IMR-90 (cell line): ENCODE measurements at regions of chr6 and their contacts with region 1.

Region 1: DNA sequence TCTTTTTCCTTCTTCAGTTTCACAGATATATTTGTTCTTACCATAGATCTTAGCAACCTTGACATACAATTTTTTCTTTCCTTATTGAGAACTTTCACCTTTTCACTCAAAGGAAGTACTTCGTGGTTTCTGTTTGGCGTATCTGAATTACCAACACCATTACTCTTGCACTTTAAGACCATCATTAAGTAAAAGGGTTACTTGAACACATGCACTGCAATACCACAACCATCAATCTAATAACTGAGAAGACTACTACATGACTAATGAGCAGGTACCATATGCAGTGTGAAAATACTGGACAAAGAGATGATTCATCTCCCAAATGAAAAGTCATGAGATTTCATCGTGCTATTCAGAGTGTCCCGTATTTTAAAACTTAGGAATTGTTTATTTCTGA is 21.7 kb upstream of the SENP6 start:
- DNase-seq: no peak
- ATAC-seq: no peak
- H3K4me3 ChIP-seq: no peak overlapping the region
- H3K27ac ChIP-seq: no peak overlapping the region
- H3K4me1 ChIP-seq: no peaks in the 10 kb centered on the region
- H3K27me3 ChIP-seq: no peaks in the 10 kb centered on the region
- CTCF ChIP-seq: no peak
- POLR2A ChIP-seq: no peak
- RAD21 ChIP-seq: no peak

Region 2: DNA sequence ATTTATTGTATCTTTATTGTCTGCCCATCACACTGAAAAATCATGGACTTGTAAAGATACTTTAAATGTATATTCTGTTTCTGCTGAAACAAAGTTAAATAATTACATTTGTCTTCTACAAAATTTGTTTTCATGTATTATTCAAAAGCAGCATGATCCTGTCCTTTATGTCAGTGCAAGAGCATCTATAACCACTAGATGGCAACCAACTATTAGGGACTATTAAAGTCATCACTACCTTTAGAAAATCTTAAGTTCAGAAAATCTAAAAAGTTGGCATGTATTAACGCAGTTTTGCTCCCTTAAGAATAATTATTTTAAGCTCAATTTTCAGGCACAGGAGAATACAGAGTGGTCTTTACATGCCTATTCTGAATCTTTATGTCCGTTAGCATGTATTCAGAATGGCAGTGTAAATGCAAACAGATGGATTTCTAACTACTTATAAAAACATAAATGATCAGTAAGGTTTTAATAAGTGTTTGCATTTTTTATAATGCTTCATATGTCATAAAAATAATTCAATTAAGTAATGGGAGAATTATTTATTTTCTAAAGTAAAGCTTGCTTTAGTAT is 313.1 kb before region 1 on chr6:
- CTCF ChIA-PET with region 1: no interaction called
- POLR2A ChIA-PET with region 1: interaction called, 17 read pairs
- dilution Hi-C with region 1: no loop called
- in situ Hi-C with region 1: no loop called
- intact Hi-C with region 1: no loop called
- DNase-seq: peak; percentile 76
- ATAC-seq: peak; percentile 67
- H3K4me3 ChIP-seq: no peak overlapping the region
- H3K27ac ChIP-seq: no peak overlapping the region
- H3K4me1 ChIP-seq: peaks cover 11% of the 10 kb centered on the region
- H3K27me3 ChIP-seq: no peaks in the 10 kb centered on the region
- CTCF ChIP-seq: peak; percentile 83
- POLR2A ChIP-seq: no peak
- RAD21 ChIP-seq: peak; percentile 85

Region 3: GRCh38 chr6:75546381-75546780 is 33.6 kb before region 1 on chr6:
- CTCF ChIA-PET with region 1: no interaction called
- POLR2A ChIA-PET with region 1: no interaction called
- dilution Hi-C with region 1: no loop called
- in situ Hi-C with region 1: no loop called
- intact Hi-C with region 1: no loop called
- DNase-seq: peak; percentile 35
- ATAC-seq: peak; percentile 68
- H3K4me3 ChIP-seq: no peak overlapping the region
- H3K27ac ChIP-seq: no peak overlapping the region
- H3K4me1 ChIP-seq: no peaks in the 10 kb centered on the region
- H3K27me3 ChIP-seq: no peaks in the 10 kb centered on the region
- CTCF ChIP-seq: peak; percentile 43
- POLR2A ChIP-seq: no peak
- RAD21 ChIP-seq: peak; percentile 36